ENCODE measurements at regions of chr1 and their contacts with region 1.

Region 1: DNA sequence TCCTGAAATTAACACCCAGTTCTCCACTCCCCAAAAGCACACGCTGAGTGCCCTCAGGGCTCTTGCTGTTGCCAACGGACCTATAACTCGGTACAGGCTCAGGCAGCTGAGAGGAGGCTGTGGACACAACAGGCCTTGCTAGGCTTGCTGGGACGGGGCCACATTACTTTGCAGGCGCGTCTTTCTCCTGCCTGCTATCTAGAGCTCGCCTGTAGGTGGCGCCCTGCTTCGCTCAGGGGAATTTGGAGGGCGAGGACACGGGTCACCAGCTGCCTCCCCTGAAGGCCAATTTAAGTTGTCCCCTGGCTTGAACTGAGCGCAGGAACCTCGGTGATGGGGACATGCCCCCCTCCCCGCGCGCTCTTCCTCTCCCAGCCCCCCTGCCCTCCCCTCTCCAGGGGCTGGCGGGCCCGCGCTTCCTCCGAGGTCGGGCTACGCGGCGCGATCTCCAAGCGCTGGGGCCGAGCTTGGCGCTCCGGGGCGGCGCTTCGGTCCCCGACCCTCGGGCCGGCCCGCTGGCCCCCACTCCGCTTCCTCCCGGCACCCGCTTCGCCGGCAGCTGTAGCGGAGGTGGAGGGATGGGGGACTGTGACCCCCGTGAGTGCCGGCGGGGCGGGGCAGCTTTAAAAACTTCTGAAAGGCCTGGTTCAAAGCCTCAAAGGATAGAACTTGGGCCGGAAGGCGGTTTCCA is 32.4 kb upstream of the NFIA start:
- DNase-seq: peak; percentile 91 to 98 (median 97)
- ATAC-seq: peak; percentile 91
- H3K4me3 ChIP-seq: peak overlapping the region; percentile 61
- H3K4me1 ChIP-seq: peaks cover 15% of the 10 kb centered on the region
- CTCF ChIP-seq: peak; percentile 95

Region 2: GRCh38 chr1:59971464-59971911 is 1078.5 kb before region 1 on chr1:
- intact Hi-C with region 1: loop called in 1 of 2 experiments (anchors 10 kb)
- DNase-seq: peak; percentile 73 to 83 (median 78)
- ATAC-seq: peak; percentile 93
- H3K4me3 ChIP-seq: no peak overlapping the region
- H3K4me1 ChIP-seq: peaks cover 13% of the 10 kb centered on the region
- CTCF ChIP-seq: peak; percentile 75

Region 3: GRCh38 chr1:61141288-61142042 is 91.5 kb after region 1 on chr1:
- intact Hi-C with region 1: no loop called
- DNase-seq: peak in 1 of 3 donors; percentile 35
- ATAC-seq: peak; percentile 84
- H3K4me3 ChIP-seq: no peak overlapping the region
- H3K4me1 ChIP-seq: peaks cover 22% of the 10 kb centered on the region
- CTCF ChIP-seq: no peak

Region 4: DNA sequence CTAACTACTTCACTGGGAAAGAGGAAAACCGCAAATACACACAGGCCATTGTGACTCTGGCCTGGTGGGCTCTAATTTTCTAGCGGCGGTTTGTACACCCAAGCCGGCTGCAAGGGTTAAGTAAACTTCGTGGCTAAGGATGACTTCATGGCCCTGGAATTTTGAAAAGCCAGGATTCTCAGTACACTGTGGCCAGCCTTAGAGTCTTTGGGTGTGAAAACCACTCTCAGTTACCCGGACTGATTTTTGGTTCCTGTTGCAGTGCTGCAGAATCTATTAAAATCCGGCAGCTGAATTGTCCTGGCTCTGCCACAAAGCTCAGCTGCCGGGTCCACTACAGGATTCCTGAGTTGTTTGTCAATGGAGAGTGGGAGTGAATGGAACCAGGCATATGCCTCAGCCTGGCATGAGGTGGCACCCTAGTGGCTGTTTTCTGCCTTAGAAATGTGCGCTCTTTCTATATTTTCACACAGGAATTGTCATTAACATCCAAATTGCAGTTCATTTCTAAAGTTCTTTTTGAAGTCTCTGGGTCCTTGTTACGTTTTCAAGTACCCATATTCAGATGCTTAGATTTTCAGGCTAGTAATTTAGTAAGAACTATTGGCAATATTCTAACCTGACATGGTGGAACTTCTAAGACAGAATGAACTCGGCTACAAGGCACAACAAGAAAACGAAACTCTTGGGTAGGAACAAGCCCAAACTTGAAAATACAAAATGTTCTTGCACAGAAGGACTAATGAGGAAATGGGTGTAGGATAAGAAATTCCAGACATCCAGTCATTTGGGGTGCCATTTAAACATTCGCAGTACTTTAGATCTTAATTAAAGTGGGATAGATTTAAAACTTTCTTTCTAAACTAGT is 288.2 kb after region 1 on chr1:
- intact Hi-C with region 1: loop called in 1 of 2 experiments (anchors 10 kb)
- DNase-seq: peak in 2 of 3 donors; percentile 50 to 73
- ATAC-seq: peak; percentile 94
- H3K4me3 ChIP-seq: no peak overlapping the region
- H3K4me1 ChIP-seq: no peaks in the 10 kb centered on the region
- CTCF ChIP-seq: no peak

Region 5: GRCh38 chr1:61453111-61453961 is 403.3 kb after region 1 on chr1:
- intact Hi-C with region 1: loop called (anchors 10 kb)
- DNase-seq: peak; percentile 76 to 94 (median 83)
- ATAC-seq: peak; percentile 75
- H3K4me3 ChIP-seq: no peak overlapping the region
- H3K4me1 ChIP-seq: peaks cover 30% of the 10 kb centered on the region
- CTCF ChIP-seq: peak; percentile 73

Measured in mucosa of descending colon (tissue), 3 donors.